ENCODE measurements at regions of chr2 and their contacts with region 1.

Region 1: GRCh38 chr2:84881581-84882414 is 914 bp upstream of the TRABD2A start:
- DNase-seq: peak; percentile 89

Region 2: GRCh38 chr2:84495539-84496146 is 386.2 kb before region 1 on chr2:
- intact Hi-C with region 1: loop called (anchors 10 kb)
- DNase-seq: no peak

Region 3: GRCh38 chr2:84713441-84713840 is 168.4 kb before region 1 on chr2:
- intact Hi-C with region 1: no loop called
- DNase-seq: no peak

Region 4: DNA sequence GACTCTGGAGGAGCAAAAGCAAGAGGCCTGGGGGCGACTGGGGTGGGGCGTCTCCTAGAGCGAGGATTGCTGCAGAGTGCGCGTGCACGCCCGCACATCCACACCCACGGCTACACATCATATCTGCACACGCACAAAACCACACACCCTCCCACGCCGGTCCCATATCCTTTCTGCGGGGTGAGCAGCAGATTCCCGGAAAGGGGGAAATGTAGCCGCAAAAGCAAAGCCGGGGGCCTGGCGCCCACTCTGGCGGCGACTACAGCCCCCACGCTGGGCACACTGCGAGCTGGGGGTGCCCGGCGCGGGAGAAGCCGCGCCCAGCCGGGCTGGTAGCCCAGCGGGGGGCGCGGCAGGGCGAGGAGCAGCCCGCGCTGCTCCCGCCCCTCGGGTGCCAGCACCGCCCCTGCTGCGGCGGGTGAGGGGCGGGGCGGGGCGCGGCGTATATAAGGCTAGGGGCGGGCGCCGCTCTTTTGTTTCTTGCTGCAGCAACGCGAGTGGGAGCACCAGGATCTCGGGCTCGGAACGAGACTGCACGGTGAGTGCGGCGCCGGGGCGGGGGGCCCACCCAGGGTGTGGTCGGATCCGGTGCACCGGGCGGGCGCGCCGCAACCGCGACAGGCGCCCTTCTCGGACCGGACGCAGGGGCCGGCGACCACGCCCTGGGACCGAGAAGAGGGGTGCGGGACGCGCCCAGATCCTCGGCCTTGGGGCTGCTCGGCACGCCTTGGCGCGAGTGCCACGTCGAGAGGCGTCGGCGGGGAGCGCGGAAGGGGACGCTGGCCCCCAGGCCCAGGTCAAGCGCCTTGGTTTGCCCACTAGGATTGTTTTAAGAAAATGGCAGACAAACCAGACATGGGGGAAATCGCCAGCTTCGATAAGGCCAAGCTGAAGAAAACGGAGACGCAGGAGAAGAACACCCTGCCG is 23.6 kb after region 1 on chr2 and contains the start of gene TMSB10:
- intact Hi-C with region 1: loop called (anchors 2 kb)
- DNase-seq: peak; percentile 96
- total RNA-seq, gene TMSB10: 452 TPM

Measured in cardiac septum (tissue), 1 donor.